PC-3 (cell line): ENCODE measurements at regions of chr1 and their contacts with region 1.

Region 1: DNA sequence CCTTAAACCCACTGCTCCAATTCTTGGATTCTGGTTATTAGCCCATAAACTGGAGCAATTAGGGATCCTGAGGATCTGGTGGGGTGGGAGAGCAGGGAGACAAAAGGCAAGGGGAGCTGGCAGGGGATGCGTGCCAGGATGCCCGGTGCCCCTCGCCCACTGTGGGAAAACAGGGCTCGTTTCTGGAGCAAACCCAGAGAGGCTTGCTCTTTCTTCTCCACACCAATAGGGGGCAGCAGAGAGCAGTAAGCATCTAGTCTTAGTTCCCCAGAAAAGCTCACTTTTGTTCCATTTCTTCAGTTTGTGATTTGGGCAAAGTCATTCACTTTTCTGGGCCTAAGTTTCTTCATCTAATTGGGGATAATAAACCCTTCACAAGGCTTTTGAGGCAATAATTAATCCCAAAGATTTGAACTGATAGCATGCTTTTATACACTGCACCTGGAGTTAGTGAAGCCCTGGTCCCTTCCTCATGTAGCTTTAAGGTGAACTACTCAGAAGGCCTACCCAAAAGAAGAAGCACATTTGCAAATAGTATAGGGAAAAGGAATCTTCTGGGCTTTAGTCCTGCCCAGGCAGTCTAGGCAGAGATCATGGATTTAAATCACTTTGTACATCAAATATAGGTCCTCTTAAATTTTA is 160.6 kb upstream of the USP24 start:
- DNase-seq: peak; percentile 58
- ATAC-seq: peak; percentile 21
- H3K4me3 ChIP-seq: no peak overlapping the region; the same call in 1 of the 2 replicates
- H3K27ac ChIP-seq: peak overlapping the region; percentile 90
- H3K4me1 ChIP-seq: peaks cover 49% of the 10 kb centered on the region
- H3K27me3 ChIP-seq: no peaks in the 10 kb centered on the region
- CTCF ChIP-seq: peak; percentile 95

Region 2: GRCh38 chr1:55310505-55310971 is 65.2 kb before region 1 on chr1:
- CTCF ChIA-PET with region 1: interaction called, 4 read pairs
- POLR2A ChIA-PET with region 1: no interaction called
- intact Hi-C with region 1: loop called (anchors 5 kb)
- DNase-seq: peak; percentile 96
- ATAC-seq: peak; percentile 98
- H3K4me3 ChIP-seq: peak overlapping the region; percentile 22; the same call in 1 of the 2 replicates
- H3K27ac ChIP-seq: peak overlapping the region; percentile 90
- H3K4me1 ChIP-seq: peaks cover 28% of the 10 kb centered on the region
- H3K27me3 ChIP-seq: no peaks in the 10 kb centered on the region
- CTCF ChIP-seq: no peak

Region 3: GRCh38 chr1:55472784-55473183 is 97.0 kb after region 1 on chr1:
- CTCF ChIA-PET with region 1: interaction called, 12 read pairs
- POLR2A ChIA-PET with region 1: no interaction called
- intact Hi-C with region 1: loop called (anchors 5 kb)
- DNase-seq: peak; percentile 87
- ATAC-seq: peak; percentile 84
- H3K4me3 ChIP-seq: no peak overlapping the region
- H3K27ac ChIP-seq: peak overlapping the region; percentile 86
- H3K4me1 ChIP-seq: peaks cover 32% of the 10 kb centered on the region
- H3K27me3 ChIP-seq: no peaks in the 10 kb centered on the region
- CTCF ChIP-seq: no peak

Region 4: GRCh38 chr1:55478742-55479141 is 103.0 kb after region 1 on chr1:
- CTCF ChIA-PET with region 1: interaction called, 7 read pairs
- POLR2A ChIA-PET with region 1: no interaction called
- intact Hi-C with region 1: loop called (anchors 5 kb)
- DNase-seq: peak; percentile 79
- ATAC-seq: peak; percentile 58
- H3K4me3 ChIP-seq: no peak overlapping the region
- H3K27ac ChIP-seq: no peak overlapping the region
- H3K4me1 ChIP-seq: peaks cover 13% of the 10 kb centered on the region
- H3K27me3 ChIP-seq: no peaks in the 10 kb centered on the region
- CTCF ChIP-seq: peak; percentile 70